ENCODE measurements at regions of chr5 and their contacts with region 1.

Region 1: GRCh38 chr5:37005946-37006540 is 129.5 kb downstream of the NIPBL start:
- DNase-seq: peak; percentile 6
- H3K4me3 ChIP-seq: no peak overlapping the region
- CTCF ChIP-seq: peak; percentile 28

Region 2: DNA sequence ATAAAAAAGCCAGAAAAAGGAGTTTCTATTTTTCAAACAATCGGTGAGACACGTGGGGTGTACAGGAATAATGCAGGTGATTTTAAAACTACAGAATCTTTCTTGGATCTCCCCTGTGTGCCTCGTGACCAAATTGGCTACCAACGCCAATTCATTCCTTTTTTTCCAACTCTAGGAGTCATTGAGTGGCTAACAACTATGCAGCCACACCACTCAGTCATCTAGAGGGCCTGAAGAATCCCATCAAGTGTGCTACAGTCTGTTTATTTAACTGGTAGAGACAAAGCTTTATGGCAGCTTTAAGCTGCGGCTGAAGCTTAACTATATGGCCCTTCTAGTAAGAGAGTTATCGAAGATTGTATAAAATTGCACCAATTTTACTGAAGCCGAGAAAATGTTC is 242.6 kb before region 1 on chr5:
- in situ Hi-C with region 1: loop called (anchors 10 kb)
- DNase-seq: no peak
- H3K4me3 ChIP-seq: no peak overlapping the region
- CTCF ChIP-seq: no peak

Measured in astrocyte of the cerebellum (primary cell).